Heart right ventricle (tissue), 16 donors: ENCODE measurements at regions of chr2 and their contacts with region 1.

Region 1: DNA sequence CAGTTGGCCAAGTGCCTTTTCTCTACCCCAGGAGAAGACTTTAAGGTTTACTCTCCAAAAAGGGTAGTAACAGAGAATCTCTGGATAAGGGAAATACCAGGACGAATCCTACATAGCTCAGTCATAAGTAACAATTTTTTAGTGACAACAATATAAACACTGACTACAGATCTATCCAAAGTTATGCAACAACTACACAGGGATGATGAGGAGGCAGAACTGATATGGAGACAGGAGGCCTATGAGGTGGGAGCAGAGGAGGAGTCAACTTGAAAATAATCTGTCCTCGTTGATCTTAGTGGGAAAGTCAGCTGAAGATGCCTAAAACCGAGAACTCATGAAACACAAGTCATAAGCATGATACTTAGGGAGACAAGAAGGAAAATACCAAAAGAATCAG is 40.2 kb downstream of the SLC35F5 start:
- DNase-seq: no peak
- ATAC-seq: no peak
- H3K4me3 ChIP-seq: no peak overlapping the region
- H3K27ac ChIP-seq: no peak overlapping the region
- H3K4me1 ChIP-seq: no peaks in the 10 kb centered on the region
- H3K27me3 ChIP-seq: no peaks in the 10 kb centered on the region
- CTCF ChIP-seq: no peak

Region 2: DNA sequence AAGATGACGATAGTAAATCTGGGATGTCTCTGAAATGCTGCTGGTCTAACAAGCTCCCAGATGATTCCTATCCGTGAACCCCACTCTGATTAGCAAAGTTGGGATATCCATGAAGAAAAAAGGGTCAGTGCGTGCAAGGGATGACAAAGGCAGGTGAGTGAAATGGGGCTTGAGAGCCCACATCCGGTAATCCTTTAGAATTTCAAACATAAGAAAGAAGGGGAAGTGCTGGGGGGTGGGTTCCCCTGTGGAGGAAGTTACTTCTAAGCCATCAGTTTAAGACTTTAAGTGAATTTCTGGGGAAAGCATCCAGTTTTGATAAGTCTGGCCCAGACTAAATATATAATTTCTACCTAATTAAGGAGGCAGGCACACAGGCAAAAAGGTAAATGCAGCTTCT is 935.6 kb after region 1 on chr2:
- intact Hi-C with region 1: loop called in 1 of 10 experiments (anchors 5 kb)
- DNase-seq: no peak
- ATAC-seq: no peak
- H3K4me3 ChIP-seq: no peak overlapping the region
- H3K27ac ChIP-seq: no peak overlapping the region
- H3K4me1 ChIP-seq: no peaks in the 10 kb centered on the region
- H3K27me3 ChIP-seq: peaks cover 0 to 5% (median 0%) of the 10 kb centered on the region in 7 donors
- CTCF ChIP-seq: no peak